ENCODE measurements at regions of chr17 and their contacts with region 1.

Region 1: DNA sequence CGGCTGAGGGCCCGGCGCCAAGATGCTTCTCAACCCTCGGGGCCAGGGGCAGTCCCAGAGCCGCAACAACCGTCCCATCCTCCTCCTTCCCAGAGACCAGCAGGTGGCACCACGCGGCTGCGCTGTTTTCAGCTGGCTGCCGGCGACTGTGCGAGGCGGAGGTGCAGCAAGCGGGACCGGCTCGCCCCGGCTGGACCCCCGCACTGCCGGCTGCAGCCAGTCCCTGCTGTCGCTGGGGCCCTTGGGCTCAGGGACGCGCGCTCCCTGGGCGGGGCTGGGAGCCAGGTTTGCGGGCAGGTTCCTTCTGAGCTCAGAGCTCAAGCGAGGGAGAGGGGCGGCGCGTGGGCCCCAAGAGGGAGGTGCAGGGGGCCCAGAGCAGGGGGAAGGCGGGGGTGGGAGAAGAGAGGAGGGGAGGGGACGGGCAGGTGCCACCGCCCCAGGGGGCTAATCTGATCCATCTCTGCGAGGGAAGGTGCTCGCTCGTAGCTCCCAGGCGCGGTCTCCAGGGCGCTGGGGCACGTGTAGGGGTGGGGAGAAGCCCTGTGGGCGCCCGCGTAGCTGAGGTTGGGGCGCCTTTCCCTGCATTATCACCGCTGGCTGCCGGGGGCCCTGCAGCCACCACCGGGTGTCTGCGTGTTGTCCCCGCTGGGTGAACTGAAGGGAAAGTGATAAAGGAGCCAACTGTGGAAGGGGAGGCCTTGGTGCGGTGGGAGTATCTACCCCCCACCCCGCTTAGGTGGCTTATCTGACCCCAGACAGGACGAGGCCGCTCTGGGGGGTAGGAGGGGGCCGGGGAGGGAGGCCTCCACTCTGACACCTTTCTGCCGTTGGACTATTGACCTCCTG is 24.2 kb downstream of the STAT5A start:
- DNase-seq: peak; percentile 85
- H3K4me3 Mint-ChIP-seq: peak overlapping the region; percentile 38
- H3K27ac Mint-ChIP-seq: peak overlapping the region; percentile 76
- H3K4me1 Mint-ChIP-seq: peaks cover 79% of the 10 kb centered on the region
- H3K27me3 Mint-ChIP-seq: no peaks in the 10 kb centered on the region

Region 2: DNA sequence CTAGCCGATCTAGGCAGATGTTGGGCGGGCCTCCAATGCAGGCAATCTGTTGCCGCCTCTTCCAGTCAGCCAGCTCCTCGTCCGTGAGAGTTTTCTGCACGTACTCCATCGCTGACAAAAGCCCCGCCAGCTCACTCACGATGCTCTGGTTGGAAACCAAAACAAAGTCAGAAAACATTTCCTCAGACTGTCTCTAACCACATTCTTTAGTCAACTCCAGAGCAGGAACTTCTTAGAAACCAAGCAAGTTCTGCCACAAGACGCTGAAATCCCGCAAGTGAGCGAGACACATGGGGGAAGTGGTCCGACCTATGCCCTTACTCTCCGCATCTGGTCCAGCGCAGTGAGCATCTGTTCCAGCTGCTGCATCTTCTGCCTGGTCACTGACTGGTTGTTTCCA is 24.9 kb after region 1 on chr17:
- CTCF ChIA-PET with region 1: interaction called, 11 read pairs
- DNase-seq: peak; percentile 84
- H3K4me3 Mint-ChIP-seq: peak overlapping the region; percentile 13
- H3K27ac Mint-ChIP-seq: peak overlapping the region; percentile 84
- H3K4me1 Mint-ChIP-seq: peaks cover 72% of the 10 kb centered on the region
- H3K27me3 Mint-ChIP-seq: no peaks in the 10 kb centered on the region

Region 3: DNA sequence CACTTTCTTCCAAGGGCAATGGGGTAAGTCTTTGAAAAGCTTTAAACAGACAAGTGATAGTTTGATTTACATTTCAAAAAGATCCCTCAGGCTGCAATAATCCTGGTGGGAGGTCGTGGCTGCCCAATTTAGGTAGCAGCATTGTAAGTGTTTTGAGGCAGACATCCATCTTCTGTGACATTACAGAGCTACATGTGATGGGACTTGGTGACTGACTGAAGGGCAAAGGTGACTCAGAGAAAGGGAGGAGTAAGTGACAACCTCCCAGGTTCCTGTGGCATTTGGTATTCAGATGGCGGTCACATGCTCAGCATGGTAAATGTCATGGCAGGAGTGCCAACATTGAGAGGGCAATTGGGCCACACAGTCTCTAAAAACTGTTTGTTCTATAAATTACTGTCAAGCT is 49.3 kb after region 1 on chr17:
- CTCF ChIA-PET with region 1: no interaction called
- DNase-seq: peak; percentile 36
- H3K4me3 Mint-ChIP-seq: no peak overlapping the region
- H3K27ac Mint-ChIP-seq: peak overlapping the region; percentile 25
- H3K4me1 Mint-ChIP-seq: peaks cover 65% of the 10 kb centered on the region
- H3K27me3 Mint-ChIP-seq: no peaks in the 10 kb centered on the region

Region 4: GRCh38 chr17:42399948-42400843 is 87.7 kb after region 1 on chr17:
- CTCF ChIA-PET with region 1: interaction called, 167 read pairs
- DNase-seq: no peak
- H3K4me3 Mint-ChIP-seq: no peak overlapping the region
- H3K27ac Mint-ChIP-seq: no peak overlapping the region
- H3K4me1 Mint-ChIP-seq: peaks cover 19% of the 10 kb centered on the region
- H3K27me3 Mint-ChIP-seq: peaks cover 25% of the 10 kb centered on the region

Measured in activated naive CD4-positive, alpha-beta T cell treated with anti-CD3 and anti-CD28 coated beads, Interleukin-2, amount 10 ng/mL, durations not matched to agents 7 days and 5 days (primary cell).